ENCODE measurements at regions of chr11 and their contacts with region 1.

Region 1: DNA sequence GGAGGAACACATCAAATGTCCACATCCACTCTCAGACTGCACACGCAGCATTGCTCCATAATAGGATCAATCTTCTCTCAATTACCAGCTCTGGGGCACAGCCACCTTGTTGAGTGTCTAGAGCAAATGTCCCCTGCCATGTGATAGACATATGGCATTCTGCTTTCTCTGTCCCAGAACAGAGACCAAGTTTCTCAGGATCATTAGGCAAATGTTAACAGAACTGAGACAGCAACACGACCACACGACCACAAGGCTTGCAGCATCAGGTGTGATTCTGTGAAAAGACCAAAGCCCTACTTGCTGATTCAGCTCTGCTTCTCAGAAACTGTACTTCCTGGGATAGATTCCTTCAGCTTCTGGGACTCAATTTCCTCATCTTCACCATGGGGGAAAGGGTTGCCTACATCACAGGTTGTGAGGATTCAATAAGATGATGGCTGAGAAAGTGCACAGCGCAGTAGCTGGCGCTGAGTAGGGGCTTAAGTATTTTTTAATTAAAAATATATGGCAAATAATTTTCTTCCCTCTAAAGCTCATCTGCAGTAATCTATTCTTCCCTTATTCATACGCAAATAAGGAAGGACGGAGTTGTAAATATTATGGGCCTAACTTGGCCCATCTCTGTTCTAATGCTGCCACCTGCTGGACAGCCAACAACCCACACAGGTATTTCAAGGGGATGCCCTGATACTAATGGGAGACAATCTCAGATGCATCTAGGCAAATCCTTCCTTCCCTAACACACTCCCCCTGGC is 54.3 kb upstream of the USP47 start:
- DNase-seq: peak; percentile 72
- H3K4me3 Mint-ChIP-seq: no peak overlapping the region
- H3K27ac Mint-ChIP-seq: no peak overlapping the region
- H3K4me1 Mint-ChIP-seq: no peaks in the 10 kb centered on the region
- H3K27me3 Mint-ChIP-seq: peaks cover 5% of the 10 kb centered on the region

Region 2: GRCh38 chr11:11028017-11028692 is 759.3 kb before region 1 on chr11:
- CTCF ChIA-PET with region 1: interaction called, 101 read pairs
- POLR2A ChIA-PET with region 1: no interaction called
- intact Hi-C with region 1: loop called (anchors 2 kb)
- DNase-seq: peak; percentile 83
- H3K4me3 Mint-ChIP-seq: no peak overlapping the region
- H3K27ac Mint-ChIP-seq: no peak overlapping the region
- H3K4me1 Mint-ChIP-seq: no peaks in the 10 kb centered on the region
- H3K27me3 Mint-ChIP-seq: no peaks in the 10 kb centered on the region

Region 3: DNA sequence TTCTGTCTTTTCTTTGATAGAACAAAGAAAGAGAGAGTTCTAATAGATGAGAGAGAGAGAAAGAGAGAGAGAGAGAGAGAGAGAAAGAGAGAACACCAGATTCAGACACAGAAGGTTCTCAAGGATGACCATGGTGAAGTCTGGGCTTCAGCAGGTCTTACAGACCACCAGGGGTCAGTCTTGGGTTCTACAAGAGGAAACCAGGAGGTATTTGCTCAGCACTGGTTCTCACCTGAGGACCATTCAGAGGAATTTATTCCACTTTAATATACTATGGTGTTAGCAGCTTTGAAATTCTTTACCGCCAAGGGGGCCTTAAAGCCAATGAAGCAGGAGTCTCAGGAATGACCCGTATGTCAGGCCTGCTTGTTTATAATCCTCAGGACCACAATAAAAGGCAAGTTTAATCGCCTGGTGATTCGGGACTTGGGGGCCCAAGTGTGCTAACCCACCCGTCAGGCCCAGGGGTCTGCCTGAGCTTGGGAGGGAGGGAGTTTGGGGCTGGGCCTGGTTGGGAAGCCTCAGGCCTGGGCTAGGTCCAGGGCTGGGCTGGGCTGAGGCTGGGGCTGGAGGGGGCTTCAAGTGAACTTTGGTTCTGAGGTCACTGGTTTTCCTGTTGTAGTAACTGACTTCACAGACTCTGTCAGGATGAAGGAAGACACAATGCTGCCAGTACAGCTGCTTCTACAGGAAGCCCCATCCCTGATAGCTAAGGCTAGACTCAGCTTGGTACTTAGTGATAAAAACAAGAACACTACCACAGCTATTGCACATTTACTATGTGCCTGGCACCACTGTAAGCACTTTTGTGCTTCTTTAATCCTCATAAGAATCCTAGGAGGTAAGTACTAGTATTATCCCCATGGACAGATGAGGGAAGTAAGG is 750.4 kb before region 1 on chr11:
- CTCF ChIA-PET with region 1: interaction called, 26 read pairs
- POLR2A ChIA-PET with region 1: no interaction called
- intact Hi-C with region 1: no loop called
- DNase-seq: peak; percentile 23
- H3K4me3 Mint-ChIP-seq: no peak overlapping the region
- H3K27ac Mint-ChIP-seq: no peak overlapping the region
- H3K4me1 Mint-ChIP-seq: peaks cover 2% of the 10 kb centered on the region
- H3K27me3 Mint-ChIP-seq: peaks cover 2% of the 10 kb centered on the region

Region 4: GRCh38 chr11:11157185-11157584 is 630.3 kb before region 1 on chr11:
- CTCF ChIA-PET with region 1: interaction called, 4 read pairs
- POLR2A ChIA-PET with region 1: no interaction called
- intact Hi-C with region 1: loop called (anchors 5 kb)
- DNase-seq: peak; percentile 59
- H3K4me3 Mint-ChIP-seq: no peak overlapping the region
- H3K27ac Mint-ChIP-seq: no peak overlapping the region
- H3K4me1 Mint-ChIP-seq: peaks cover 14% of the 10 kb centered on the region
- H3K27me3 Mint-ChIP-seq: peaks cover 2% of the 10 kb centered on the region

Region 5: DNA sequence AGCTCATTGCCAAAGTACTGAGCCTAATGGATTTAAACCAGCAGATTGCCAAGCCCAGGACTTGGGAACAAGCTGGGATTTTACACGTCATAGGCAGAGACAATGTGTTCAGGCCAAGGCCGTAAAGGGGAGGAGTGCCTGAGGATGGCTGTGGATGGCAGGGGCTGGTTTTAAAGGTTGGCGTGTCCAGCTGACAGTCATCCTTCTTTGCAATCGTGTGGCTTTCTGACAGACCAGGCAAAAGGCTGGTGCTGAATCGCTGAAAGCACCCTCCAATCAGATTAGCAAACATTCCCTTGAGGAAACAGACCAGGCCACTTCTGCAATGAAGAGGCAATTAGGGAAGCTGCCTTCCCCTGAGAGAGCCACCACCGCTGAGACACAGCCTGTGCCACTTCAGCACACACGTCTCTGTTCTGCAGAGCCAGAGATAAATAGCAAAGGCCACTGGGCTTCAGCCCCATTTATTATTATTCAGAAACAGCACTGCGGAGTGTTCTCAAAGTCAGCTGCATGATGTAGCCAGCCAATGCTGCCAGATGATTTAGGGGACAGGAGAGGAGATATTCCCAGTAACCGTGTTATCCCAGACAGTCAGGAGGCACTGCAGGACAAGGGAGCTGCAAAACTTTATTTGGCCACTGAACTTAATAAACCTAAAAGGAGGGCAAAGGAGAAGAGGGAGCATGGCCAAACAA is 380.3 kb before region 1 on chr11:
- CTCF ChIA-PET with region 1: no interaction called
- POLR2A ChIA-PET with region 1: no interaction called
- intact Hi-C with region 1: loop called (anchors 5 kb)
- DNase-seq: no peak
- H3K4me3 Mint-ChIP-seq: no peak overlapping the region
- H3K27ac Mint-ChIP-seq: no peak overlapping the region
- H3K4me1 Mint-ChIP-seq: no peaks in the 10 kb centered on the region
- H3K27me3 Mint-ChIP-seq: peaks cover 11% of the 10 kb centered on the region

Region 6: GRCh38 chr11:11621573-11622319 is 165.7 kb before region 1 on chr11 and contains the start of gene GALNT18:
- CTCF ChIA-PET with region 1: interaction called, 3 read pairs
- POLR2A ChIA-PET with region 1: no interaction called
- intact Hi-C with region 1: loop called (anchors 5 kb)
- DNase-seq: peak; percentile 88
- H3K4me3 Mint-ChIP-seq: peak within 1 kb of the TSS; percentile 67
- H3K27ac Mint-ChIP-seq: no peak within 1 kb of the TSS
- H3K4me1 Mint-ChIP-seq: peaks cover 3% of the 10 kb centered on the region
- H3K27me3 Mint-ChIP-seq: peaks cover 54% of the 10 kb centered on the region
- total RNA-seq, gene GALNT18: 2.4 to 2.7 TPM

Region 7: DNA sequence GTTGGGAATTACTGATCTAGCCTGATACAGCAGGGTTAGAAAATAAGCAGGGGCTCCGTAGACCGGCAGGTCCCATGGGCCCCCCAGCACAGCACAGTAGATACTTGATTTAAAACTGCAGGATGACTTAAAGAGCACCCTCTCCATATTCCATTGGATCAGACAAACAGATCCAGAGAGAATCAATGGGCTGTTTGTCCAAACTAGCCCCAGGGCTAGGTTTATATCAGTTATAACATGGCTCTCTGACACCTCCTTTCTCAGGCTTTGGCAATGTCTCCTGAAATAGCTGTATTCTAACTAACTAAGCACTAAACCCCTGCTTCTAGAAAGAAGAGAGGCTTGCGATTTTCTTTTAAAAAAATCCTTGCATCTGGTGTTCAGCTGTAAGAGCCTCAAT is 65.2 kb before region 1 on chr11:
- CTCF ChIA-PET with region 1: no interaction called
- POLR2A ChIA-PET with region 1: no interaction called
- intact Hi-C with region 1: no loop called
- DNase-seq: no peak
- H3K4me3 Mint-ChIP-seq: no peak overlapping the region
- H3K27ac Mint-ChIP-seq: no peak overlapping the region
- H3K4me1 Mint-ChIP-seq: no peaks in the 10 kb centered on the region
- H3K27me3 Mint-ChIP-seq: peaks cover 20% of the 10 kb centered on the region